ENCODE measurements at regions of chr9 and their contacts with region 1.

Region 1: DNA sequence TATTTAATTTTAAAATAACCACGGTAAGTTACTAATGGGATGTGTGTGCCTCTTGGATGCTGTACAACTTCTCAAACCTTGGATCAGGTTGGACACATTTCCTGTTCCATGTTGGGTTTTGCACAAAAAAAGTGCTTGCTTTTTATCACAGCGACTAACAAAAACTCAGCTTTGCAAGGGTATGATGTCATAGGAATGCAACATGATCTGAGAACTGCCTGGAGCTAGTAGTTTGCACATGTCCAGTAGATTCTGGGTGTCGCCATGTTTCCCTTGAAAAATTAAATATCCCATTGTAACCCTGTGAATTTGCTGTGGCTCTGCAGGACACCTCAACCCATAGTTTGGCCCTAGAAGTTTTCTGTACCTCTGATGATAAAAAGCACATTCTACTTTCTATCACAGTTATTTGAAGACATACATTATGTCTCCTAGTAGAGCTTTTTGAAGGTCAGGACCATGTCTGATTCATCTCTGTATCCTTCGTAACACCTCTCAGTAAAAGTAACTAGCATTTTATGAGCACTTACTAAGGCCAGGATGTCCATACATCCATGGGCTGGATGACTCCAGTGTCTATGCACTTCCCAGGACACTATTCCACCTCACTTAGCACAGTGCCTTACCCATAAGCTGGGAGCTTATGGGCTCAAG is 11.5 kb upstream of the FRMPD1 start:
- DNase-seq: peak; percentile 8
- H3K4me3 ChIP-seq: no peak overlapping the region
- H3K27ac ChIP-seq: no peak overlapping the region
- H3K27me3 ChIP-seq: peaks cover 13% of the 10 kb centered on the region
- CTCF ChIP-seq: no peak

Region 2: GRCh38 chr9:37746848-37747753 is 107.9 kb after region 1 on chr9:
- in situ Hi-C with region 1: loop called (anchors 25 kb)
- DNase-seq: peak; percentile 65
- H3K4me3 ChIP-seq: no peak overlapping the region
- H3K27ac ChIP-seq: no peak overlapping the region
- H3K27me3 ChIP-seq: no peaks in the 10 kb centered on the region
- CTCF ChIP-seq: peak; percentile 97

Measured in brain microvascular endothelial cell (primary cell).